ENCODE measurements at regions of chr17 and their contacts with region 1.

Region 1: DNA sequence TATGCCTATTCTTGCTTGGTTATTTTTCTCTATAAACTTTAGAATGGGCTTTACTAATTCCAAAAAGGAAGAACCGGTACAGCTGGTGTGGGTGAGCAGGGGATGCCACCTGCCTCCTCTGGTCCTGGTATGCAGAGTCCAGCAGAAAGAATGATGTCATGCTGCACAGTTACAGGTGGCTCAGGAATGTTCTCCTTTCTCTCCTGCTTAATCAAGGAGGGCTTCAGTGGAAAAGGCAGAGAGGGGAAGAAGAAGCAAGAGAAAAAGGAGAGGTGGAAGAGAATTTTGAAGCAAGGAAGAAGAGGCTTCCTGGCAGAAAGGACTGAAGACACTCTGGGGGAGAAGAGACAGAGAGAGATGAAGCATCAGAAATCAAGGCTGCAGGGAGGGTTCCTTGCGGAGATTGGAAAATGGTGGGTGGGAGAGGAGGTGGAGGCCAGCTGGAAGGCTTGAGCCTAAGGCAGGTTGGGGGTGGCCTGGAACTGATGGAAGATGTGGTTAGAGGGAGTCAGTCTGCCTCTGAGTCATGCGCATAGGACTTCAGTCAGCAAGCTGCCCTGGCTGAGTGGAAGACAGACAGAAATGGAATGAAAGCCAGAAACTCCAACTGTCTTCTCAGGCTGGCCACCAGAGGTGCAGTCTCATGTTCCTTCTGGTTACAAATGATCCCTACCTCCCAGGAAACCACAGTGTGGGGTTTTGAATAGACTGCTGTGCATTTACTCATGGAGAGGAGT is 64.6 kb upstream of the CRHR1 start:
- DNase-seq: peak; percentile 83
- H3K4me3 Mint-ChIP-seq: no peak overlapping the region
- H3K27ac Mint-ChIP-seq: no peak overlapping the region
- H3K4me1 Mint-ChIP-seq: peaks cover 14% of the 10 kb centered on the region
- H3K27me3 Mint-ChIP-seq: peaks cover 36% of the 10 kb centered on the region
- CTCF ChIP-seq: peak; percentile 65

Region 2: DNA sequence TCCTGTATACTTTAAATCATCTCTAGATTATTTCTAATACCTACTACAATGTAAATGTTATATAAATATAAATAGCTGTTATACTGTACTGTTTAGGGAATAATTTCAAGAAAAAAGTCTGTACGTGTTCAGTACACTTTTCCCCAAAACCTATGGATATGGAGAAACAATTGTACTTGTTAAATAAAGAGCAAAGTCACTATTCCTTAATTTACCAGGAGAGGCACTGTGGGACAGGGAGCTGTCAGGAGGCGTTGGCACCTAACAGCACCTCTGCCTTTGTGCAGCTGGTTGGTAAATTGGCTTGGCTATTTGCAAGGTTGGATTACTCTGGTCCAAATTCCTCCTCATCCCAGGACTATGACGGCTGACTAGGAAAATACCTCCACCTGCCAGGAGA is 92.6 kb after region 1 on chr17:
- CTCF ChIA-PET with region 1: no interaction called
- POLR2A ChIA-PET with region 1: no interaction called
- intact Hi-C with region 1: no loop called
- DNase-seq: peak; percentile 30
- H3K4me3 Mint-ChIP-seq: no peak overlapping the region
- H3K27ac Mint-ChIP-seq: no peak overlapping the region
- H3K4me1 Mint-ChIP-seq: no peaks in the 10 kb centered on the region
- H3K27me3 Mint-ChIP-seq: peaks cover 5% of the 10 kb centered on the region
- CTCF ChIP-seq: peak; percentile 20

Region 3: GRCh38 chr17:45834471-45835396 is 115.2 kb after region 1 on chr17:
- CTCF ChIA-PET with region 1: interaction called, 7 read pairs
- POLR2A ChIA-PET with region 1: no interaction called
- intact Hi-C with region 1: loop called (anchors 2 kb)
- DNase-seq: peak; percentile 35
- H3K4me3 Mint-ChIP-seq: no peak overlapping the region
- H3K27ac Mint-ChIP-seq: no peak overlapping the region
- H3K4me1 Mint-ChIP-seq: no peaks in the 10 kb centered on the region
- H3K27me3 Mint-ChIP-seq: peaks cover 22% of the 10 kb centered on the region
- CTCF ChIP-seq: no peak